ENCODE measurements at regions of chr2 and their contacts with region 1.

Region 1: GRCh38 chr2:15636972-15637785 is 45.5 kb downstream of the DDX1 start:
- DNase-seq: peak; percentile 60
- H3K4me3 ChIP-seq: no peak overlapping the region
- H3K27ac ChIP-seq: no peak overlapping the region
- H3K4me1 ChIP-seq: no peaks in the 10 kb centered on the region
- CTCF ChIP-seq: peak; percentile 97

Region 2: GRCh38 chr2:16281451-16282336 is 644.5 kb after region 1 on chr2:
- CTCF ChIA-PET with region 1: no interaction called
- POLR2A ChIA-PET with region 1: no interaction called
- intact Hi-C with region 1: loop called (anchors 5 kb)
- DNase-seq: peak; percentile 13
- H3K4me3 ChIP-seq: no peak overlapping the region
- H3K27ac ChIP-seq: no peak overlapping the region
- H3K4me1 ChIP-seq: no peaks in the 10 kb centered on the region
- CTCF ChIP-seq: peak; percentile 71